Tibial artery (tissue), 4 donors: ENCODE measurements at regions of chr10 and their contacts with region 1.

Region 1: GRCh38 chr10:95253007-95253406 is 37.8 kb downstream of the PDLIM1 start:
- DNase-seq: no peak
- H3K4me3 ChIP-seq: no peak overlapping the region
- H3K27ac ChIP-seq: peak overlapping the region in 1 of 2 donors; percentile 7
- H3K4me1 ChIP-seq: peaks cover 0 to 44% (median 23%) of the 10 kb centered on the region in 4 donors
- H3K27me3 ChIP-seq: no peaks in the 10 kb centered on the region
- CTCF ChIP-seq: no peak

Region 2: DNA sequence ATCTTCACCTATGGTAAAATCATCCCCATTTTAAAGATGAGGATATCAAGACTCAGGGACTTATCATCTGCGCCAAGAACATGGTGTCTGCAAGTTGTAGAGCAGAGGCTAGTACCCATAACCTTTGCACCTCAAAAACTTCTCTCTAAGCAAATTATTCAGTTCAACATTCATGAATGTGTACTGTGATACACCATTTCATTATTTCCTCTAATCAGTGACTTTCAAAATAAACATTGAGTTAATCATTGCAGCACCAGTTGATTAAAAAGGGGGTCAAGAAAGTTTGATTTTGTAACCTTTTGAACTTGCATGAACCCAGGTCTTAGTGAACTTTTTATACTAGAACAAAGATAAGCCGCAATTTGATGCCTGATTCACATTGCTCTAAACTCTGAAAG is 136.1 kb before region 1 on chr10:
- intact Hi-C with region 1: no loop called
- DNase-seq: no peak
- H3K4me3 ChIP-seq: no peak overlapping the region
- H3K27ac ChIP-seq: no peak overlapping the region
- H3K4me1 ChIP-seq: no peaks in the 10 kb centered on the region
- H3K27me3 ChIP-seq: no peaks in the 10 kb centered on the region
- CTCF ChIP-seq: no peak

Region 3: GRCh38 chr10:95225135-95225534 is 27.9 kb before region 1 on chr10:
- intact Hi-C with region 1: loop called (anchors 1 kb)
- DNase-seq: no peak
- H3K4me3 ChIP-seq: no peak overlapping the region
- H3K27ac ChIP-seq: no peak overlapping the region
- H3K4me1 ChIP-seq: peaks cover 0 to 6% (median 2%) of the 10 kb centered on the region in 4 donors
- H3K27me3 ChIP-seq: no peaks in the 10 kb centered on the region
- CTCF ChIP-seq: no peak